ENCODE measurements at regions of chr7 and their contacts with region 1.

Region 1: GRCh38 chr7:40244226-40244625 is 109.4 kb downstream of the SUGCT start:
- DNase-seq: no peak
- ATAC-seq: no peak
- H3K4me3 ChIP-seq: no peak overlapping the region
- H3K27ac ChIP-seq: no peak overlapping the region
- H3K4me1 ChIP-seq: no peaks in the 10 kb centered on the region
- H3K27me3 ChIP-seq: no peaks in the 10 kb centered on the region
- CTCF ChIP-seq: no peak

Region 2: GRCh38 chr7:40221836-40222235 is 22.4 kb before region 1 on chr7:
- CTCF ChIA-PET with region 1: no interaction called
- POLR2A ChIA-PET with region 1: interaction called, 12 read pairs
- in situ Hi-C with region 1: no loop called
- intact Hi-C with region 1: no loop called
- DNase-seq: no peak
- ATAC-seq: no peak
- H3K4me3 ChIP-seq: no peak overlapping the region
- H3K27ac ChIP-seq: no peak overlapping the region
- H3K4me1 ChIP-seq: no peaks in the 10 kb centered on the region
- H3K27me3 ChIP-seq: no peaks in the 10 kb centered on the region
- CTCF ChIP-seq: no peak

Region 3: GRCh38 chr7:40279991-40280390 is 35.8 kb after region 1 on chr7:
- CTCF ChIA-PET with region 1: no interaction called
- POLR2A ChIA-PET with region 1: no interaction called
- in situ Hi-C with region 1: no loop called
- intact Hi-C with region 1: no loop called
- DNase-seq: no peak
- ATAC-seq: no peak
- H3K4me3 ChIP-seq: no peak overlapping the region
- H3K27ac ChIP-seq: no peak overlapping the region
- H3K4me1 ChIP-seq: no peaks in the 10 kb centered on the region
- H3K27me3 ChIP-seq: no peaks in the 10 kb centered on the region
- CTCF ChIP-seq: no peak

Region 4: DNA sequence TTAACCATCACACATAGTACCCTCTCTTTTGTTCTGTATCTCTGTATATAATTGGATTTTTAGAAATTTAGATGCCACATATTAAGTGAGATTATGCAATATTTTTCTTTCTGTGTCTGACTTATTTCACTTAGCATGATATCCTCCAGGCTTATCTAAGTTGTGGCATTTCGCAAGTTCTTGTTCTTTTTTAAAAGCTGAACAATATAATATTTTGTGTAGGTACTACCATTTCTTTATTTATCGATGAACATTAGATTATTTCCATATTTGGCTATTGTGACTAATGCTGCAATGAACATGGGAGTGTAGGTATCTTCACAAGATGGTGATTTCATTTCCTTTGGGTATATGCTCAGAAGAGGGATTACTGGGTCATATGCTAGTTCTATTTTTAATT is 185.6 kb after region 1 on chr7:
- CTCF ChIA-PET with region 1: no interaction called
- POLR2A ChIA-PET with region 1: no interaction called
- in situ Hi-C with region 1: no loop called
- intact Hi-C with region 1: no loop called
- DNase-seq: no peak
- ATAC-seq: no peak
- H3K4me3 ChIP-seq: no peak overlapping the region
- H3K27ac ChIP-seq: no peak overlapping the region
- H3K4me1 ChIP-seq: no peaks in the 10 kb centered on the region
- H3K27me3 ChIP-seq: no peaks in the 10 kb centered on the region
- CTCF ChIP-seq: no peak